ENCODE measurements at regions of chr7 and their contacts with region 1.

Region 1: DNA sequence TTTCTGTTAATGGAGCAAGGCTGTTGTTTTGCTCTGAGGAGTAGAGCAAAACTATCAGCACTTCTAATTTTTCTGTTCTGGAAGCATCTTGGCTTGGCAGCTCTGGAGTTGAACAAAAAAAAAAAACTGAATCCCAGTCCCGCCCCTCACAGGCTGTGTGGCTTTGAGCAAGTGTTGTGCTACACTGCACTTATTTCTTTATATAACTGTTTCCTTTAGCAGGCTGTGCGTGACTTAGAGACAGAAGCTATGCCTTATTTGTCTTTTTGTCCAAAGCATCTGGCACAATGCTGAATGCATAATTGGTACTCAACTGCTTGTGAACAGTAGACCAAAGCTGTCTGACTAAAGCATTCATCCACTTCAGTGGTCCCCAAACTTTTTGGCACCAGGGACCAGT is 96.1 kb downstream of the AMPH start:
- DNase-seq: no peak
- ATAC-seq: no peak
- H3K4me3 ChIP-seq: no peak overlapping the region
- H3K27ac ChIP-seq: no peak overlapping the region
- H3K4me1 ChIP-seq: no peaks in the 10 kb centered on the region
- H3K27me3 ChIP-seq: peaks cover 36% of the 10 kb centered on the region
- CTCF ChIP-seq: no peak

Region 2: GRCh38 chr7:38506756-38507155 is 28.3 kb before region 1 on chr7:
- CTCF ChIA-PET with region 1: no interaction called
- POLR2A ChIA-PET with region 1: no interaction called
- intact Hi-C with region 1: loop called (anchors 1 kb)
- DNase-seq: no peak
- ATAC-seq: no peak
- H3K4me3 ChIP-seq: no peak overlapping the region
- H3K27ac ChIP-seq: no peak overlapping the region
- H3K4me1 ChIP-seq: no peaks in the 10 kb centered on the region
- H3K27me3 ChIP-seq: peaks cover 53% of the 10 kb centered on the region
- CTCF ChIP-seq: no peak

Region 3: GRCh38 chr7:38629651-38630510 is 94.8 kb after region 1 on chr7:
- CTCF ChIA-PET with region 1: no interaction called
- POLR2A ChIA-PET with region 1: no interaction called
- intact Hi-C with region 1: no loop called
- DNase-seq: no peak
- ATAC-seq: no peak
- H3K4me3 ChIP-seq: no peak overlapping the region
- H3K27ac ChIP-seq: no peak overlapping the region
- H3K4me1 ChIP-seq: no peaks in the 10 kb centered on the region
- H3K27me3 ChIP-seq: peaks cover 57% of the 10 kb centered on the region
- CTCF ChIP-seq: no peak

Region 4: DNA sequence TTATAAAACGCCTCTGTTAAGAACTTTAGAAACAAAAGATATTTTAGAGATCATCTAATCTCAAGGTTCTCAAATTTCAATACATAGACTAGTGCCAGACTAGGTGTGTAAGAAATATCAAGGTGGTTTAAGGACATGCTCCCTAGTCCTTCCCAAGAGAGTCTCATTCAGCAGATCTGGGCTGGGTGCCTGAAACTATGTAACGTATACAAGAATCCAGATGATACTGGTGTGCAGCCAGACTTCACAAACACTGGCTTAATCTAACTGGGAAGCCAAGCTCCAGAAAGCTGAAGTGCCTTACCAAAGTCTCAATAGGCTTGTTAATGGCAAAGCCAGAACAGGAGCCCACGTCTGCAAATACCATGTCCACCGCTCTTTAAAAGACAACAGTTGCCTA is 201.1 kb after region 1 on chr7:
- CTCF ChIA-PET with region 1: no interaction called
- POLR2A ChIA-PET with region 1: no interaction called
- intact Hi-C with region 1: no loop called
- DNase-seq: no peak
- ATAC-seq: no peak
- H3K4me3 ChIP-seq: no peak overlapping the region
- H3K27ac ChIP-seq: no peak overlapping the region
- H3K4me1 ChIP-seq: no peaks in the 10 kb centered on the region
- H3K27me3 ChIP-seq: no peaks in the 10 kb centered on the region
- CTCF ChIP-seq: no peak

Measured in PC-3 (cell line).